Left ventricle myocardium superior (tissue), 1 donor: ENCODE measurements at regions of chr6 and their contacts with region 1.

Region 1: DNA sequence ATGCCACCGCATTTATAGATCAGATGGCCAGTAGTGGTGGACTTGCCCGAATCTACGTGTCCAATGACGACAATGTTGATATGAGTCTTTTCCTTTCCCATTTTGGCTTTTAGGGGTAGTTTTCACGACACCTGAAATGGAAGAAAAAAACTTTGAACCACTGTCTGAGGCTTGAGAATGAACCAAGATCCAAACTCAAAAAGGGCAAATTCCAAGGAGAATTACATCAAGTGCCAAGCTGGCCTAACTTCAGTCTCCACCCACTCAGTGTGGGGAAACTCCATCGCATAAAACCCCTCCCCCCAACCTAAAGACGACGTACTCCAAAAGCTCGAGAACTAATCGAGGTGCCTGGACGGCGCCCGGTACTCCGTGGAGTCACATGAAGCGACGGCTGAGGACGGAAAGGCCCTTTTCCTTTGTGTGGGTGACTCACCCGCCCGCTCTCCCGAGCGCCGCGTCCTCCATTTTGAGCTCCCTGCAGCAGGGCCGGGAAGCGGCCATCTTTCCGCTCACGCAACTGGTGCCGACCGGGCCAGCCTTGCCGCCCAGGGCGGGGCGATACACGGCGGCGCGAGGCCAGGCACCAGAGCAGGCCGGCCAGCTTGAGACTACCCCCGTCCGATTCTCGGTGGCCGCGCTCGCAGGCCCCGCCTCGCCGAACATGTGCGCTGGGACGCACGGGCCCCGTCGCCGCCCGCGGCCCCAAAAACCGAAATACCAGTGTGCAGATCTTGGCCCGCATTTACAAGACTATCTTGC is 725 bp downstream of the EEF1A1 start:
- DNase-seq: peak; percentile 83
- ATAC-seq: peak; percentile 63

Region 2: GRCh38 chr6:73610444-73611275 is 90.6 kb after region 1 on chr6:
- intact Hi-C with region 1: loop called (anchors 5 kb)
- DNase-seq: no peak
- ATAC-seq: peak; percentile 47

Region 3: GRCh38 chr6:73631849-73632248 is 111.7 kb after region 1 on chr6:
- intact Hi-C with region 1: no loop called
- DNase-seq: no peak
- ATAC-seq: no peak